Mammary epithelial cell (primary cell): ENCODE measurements at regions of chr2 and their contacts with region 1.

Region 1: DNA sequence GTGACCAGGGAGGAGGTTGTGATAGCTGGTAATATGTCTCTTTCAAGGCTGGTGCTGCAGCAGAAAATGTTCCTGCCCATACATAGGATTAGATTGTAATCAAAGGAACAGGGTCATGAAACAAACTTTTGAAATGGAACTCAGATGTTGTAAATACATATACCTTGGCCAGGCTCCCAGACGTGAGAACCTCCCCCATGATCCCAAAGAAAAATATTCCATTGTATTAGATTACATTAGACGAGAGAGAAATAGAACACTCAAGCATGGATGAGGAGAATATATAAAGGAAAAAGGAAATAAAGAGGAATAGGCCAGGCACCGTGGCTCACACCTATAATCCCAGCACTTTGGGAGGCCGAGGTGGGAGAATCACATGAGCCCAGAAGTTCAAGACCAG is 52.6 kb downstream of the RPL37A start:
- DNase-seq: peak; percentile 65
- H3K4me3 ChIP-seq: no peak overlapping the region
- H3K27ac ChIP-seq: peak overlapping the region; percentile 69
- H3K4me1 ChIP-seq: peaks cover 77% of the 10 kb centered on the region
- H3K27me3 ChIP-seq: no peaks in the 10 kb centered on the region
- CTCF ChIP-seq: no peak

Region 2: DNA sequence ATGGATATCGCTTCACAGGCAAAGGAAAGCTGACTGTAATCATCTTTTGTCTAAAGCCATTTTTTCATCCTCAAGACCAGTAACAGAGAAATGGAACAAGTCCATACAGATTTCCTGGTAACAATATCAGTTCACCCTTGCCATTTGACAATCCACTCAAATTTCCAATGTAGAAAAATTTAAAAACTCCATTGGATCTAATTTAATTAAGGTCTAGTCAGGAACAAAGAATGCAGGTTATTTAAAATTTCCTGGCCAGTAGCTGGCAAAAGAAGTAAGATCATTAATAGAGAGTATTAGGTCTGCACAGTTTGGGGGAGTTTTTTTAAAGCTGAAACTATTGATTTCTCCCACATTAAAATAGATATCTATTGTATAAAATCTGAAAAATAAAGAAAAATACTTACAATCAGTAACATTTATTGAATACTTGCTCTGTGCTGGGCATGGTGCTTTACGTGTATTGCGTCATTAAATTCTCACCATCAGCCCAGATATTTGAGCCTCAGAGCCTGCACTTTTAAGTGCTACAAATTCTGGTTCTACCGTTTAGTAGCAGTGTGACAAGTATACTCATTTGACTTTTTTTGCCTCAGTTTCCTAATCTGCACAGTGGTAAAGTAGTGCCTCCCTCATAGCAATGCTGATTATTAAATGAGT is 97.1 kb before region 1 on chr2:
- CTCF ChIA-PET with region 1: no interaction called
- dilution Hi-C with region 1: no loop called
- in situ Hi-C with region 1: no loop called
- intact Hi-C with region 1: no loop called
- DNase-seq: no peak
- H3K4me3 ChIP-seq: no peak overlapping the region
- H3K27ac ChIP-seq: no peak overlapping the region
- H3K4me1 ChIP-seq: no peaks in the 10 kb centered on the region
- H3K27me3 ChIP-seq: no peaks in the 10 kb centered on the region
- CTCF ChIP-seq: no peak

Region 3: GRCh38 chr2:216533609-216534008 is 17.6 kb before region 1 on chr2:
- CTCF ChIA-PET with region 1: no interaction called
- dilution Hi-C with region 1: no loop called
- in situ Hi-C with region 1: no loop called
- intact Hi-C with region 1: loop called (anchors 2 kb)
- DNase-seq: peak; percentile 79
- H3K4me3 ChIP-seq: peak overlapping the region in 2 of 3 experiments; percentile 9 to 35
- H3K27ac ChIP-seq: peak overlapping the region; percentile 19
- H3K4me1 ChIP-seq: peaks cover 44% of the 10 kb centered on the region
- H3K27me3 ChIP-seq: no peaks in the 10 kb centered on the region
- CTCF ChIP-seq: no peak

Region 4: GRCh38 chr2:216596236-216596979 is 45.2 kb after region 1 on chr2:
- CTCF ChIA-PET with region 1: no interaction called
- dilution Hi-C with region 1: no loop called
- in situ Hi-C with region 1: no loop called
- intact Hi-C with region 1: loop called (anchors 5 kb)
- DNase-seq: no peak
- H3K4me3 ChIP-seq: no peak overlapping the region
- H3K27ac ChIP-seq: no peak overlapping the region
- H3K4me1 ChIP-seq: peaks cover 28% of the 10 kb centered on the region
- H3K27me3 ChIP-seq: no peaks in the 10 kb centered on the region
- CTCF ChIP-seq: no peak